ENCODE measurements at regions of chr18 and their contacts with region 1.

Region 1: DNA sequence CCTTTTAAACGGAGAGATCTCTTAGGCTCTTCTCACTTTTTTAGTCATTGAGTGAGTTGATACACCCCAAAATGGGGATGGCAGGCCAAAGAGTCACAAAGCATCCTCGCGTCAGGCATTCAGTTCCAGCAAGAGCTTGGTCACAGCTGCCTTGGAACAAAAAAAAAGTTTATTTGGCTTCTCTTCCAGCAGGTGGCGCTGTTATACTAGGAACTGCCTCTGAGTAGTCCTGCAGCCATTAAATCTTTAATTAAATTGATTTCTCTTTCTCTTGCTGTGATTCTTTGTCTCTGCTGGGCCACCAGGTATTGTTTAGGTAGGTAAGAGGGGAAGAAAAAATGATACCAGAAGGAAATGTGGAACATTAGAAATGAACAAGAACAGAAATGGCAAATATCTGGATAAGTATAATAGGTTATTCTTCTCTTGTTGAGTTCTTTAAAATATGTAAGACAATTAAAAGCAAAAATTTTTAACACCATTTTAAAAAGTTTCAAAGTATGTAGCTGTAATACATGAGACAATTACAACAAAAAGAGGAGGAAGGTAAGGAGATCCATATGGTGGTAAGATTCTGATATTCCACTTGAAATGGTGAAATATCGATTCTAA is 175.1 kb downstream of the GALNT1 start:
- DNase-seq: peak; percentile 21 to 72 (median 56)
- ATAC-seq: peak; percentile 74
- H3K4me3 ChIP-seq: no peak overlapping the region
- H3K4me3 Mint-ChIP-seq: no peak overlapping the region
- H3K27ac ChIP-seq: no peak overlapping the region
- H3K27ac Mint-ChIP-seq: no peak overlapping the region
- H3K4me1 ChIP-seq: no peaks in the 10 kb centered on the region
- H3K4me1 Mint-ChIP-seq: peaks cover 0 to 2% (median 0%) of the 10 kb centered on the region in 7 donors
- H3K27me3 ChIP-seq: no peaks in the 10 kb centered on the region
- H3K27me3 Mint-ChIP-seq: peaks cover 4 to 38% (median 25%) of the 10 kb centered on the region in 5 donors

Region 2: DNA sequence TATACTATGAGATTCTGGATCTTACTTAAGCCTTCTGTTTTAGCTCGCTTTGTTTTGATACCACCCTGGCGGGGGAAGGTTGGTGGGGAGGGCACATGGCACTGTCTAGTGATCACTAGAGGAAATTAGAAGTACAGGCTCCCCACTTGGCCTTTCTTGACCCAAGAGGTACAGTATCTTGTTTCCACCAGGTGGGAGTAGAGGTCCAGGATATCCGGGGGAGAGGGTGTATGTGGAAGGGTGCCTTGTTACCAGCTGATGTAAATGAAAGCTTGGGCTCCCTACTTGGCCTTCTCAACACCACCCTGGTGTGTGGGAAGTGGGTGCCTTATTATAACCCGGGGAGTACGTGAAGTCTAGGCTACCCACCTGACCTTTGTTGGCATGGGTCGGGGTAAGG is 167.6 kb before region 1 on chr18:
- CTCF ChIA-PET with region 1: no interaction called
- POLR2A ChIA-PET with region 1: no interaction called
- intact Hi-C with region 1: loop called in 1 of 2 experiments (anchors 1 kb)
- DNase-seq: peak in 7 of 9 donors; percentile 21 to 47 (median 35)
- ATAC-seq: peak; percentile 74
- H3K4me3 ChIP-seq: no peak overlapping the region
- H3K4me3 Mint-ChIP-seq: no peak overlapping the region
- H3K27ac ChIP-seq: no peak overlapping the region
- H3K27ac Mint-ChIP-seq: peak overlapping the region in 1 of 9 donors; percentile 68
- H3K4me1 ChIP-seq: no peaks in the 10 kb centered on the region
- H3K4me1 Mint-ChIP-seq: peaks cover 5 to 53% (median 28%) of the 10 kb centered on the region in 7 donors
- H3K27me3 ChIP-seq: no peaks in the 10 kb centered on the region
- H3K27me3 Mint-ChIP-seq: no peaks in the 10 kb centered on the region

Region 3: DNA sequence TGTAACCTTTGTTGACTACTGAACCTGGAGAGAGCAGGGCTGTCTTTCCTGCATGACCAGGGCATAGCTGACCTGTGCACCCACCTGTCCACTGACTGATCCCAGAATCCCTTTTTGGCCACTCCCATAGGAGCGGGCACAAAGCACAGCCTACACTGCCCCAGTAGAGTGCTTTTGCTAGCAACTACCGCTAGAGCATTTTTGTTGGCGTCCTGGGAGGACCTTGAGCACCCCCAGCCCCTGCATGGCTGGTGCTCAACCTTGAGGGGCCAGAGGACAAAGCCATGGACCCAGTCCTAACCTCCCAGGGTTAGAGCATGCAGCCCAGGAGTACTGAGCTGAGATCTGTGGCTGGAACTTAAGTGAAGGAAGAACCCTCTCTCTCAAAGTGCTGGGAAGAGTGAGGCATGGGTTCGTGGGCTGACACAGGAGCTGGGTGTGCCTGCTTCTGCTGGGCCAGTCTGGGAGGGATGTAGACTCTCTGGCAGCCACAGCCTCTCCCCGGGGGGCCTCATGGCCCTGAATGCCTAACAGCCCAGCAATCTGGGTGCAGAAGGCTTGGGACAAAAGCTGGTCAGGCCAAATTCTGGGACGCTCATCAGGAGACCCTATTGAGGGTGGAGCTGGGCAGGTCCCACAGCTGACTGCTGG is 35.1 kb before region 1 on chr18:
- CTCF ChIA-PET with region 1: no interaction called
- POLR2A ChIA-PET with region 1: no interaction called
- intact Hi-C with region 1: no loop called
- DNase-seq: no peak
- ATAC-seq: no peak
- H3K4me3 ChIP-seq: no peak overlapping the region
- H3K4me3 Mint-ChIP-seq: no peak overlapping the region
- H3K27ac ChIP-seq: no peak overlapping the region
- H3K27ac Mint-ChIP-seq: no peak overlapping the region
- H3K4me1 ChIP-seq: no peaks in the 10 kb centered on the region
- H3K4me1 Mint-ChIP-seq: no peaks in the 10 kb centered on the region
- H3K27me3 ChIP-seq: no peaks in the 10 kb centered on the region
- H3K27me3 Mint-ChIP-seq: peaks cover 4 to 29% (median 17%) of the 10 kb centered on the region in 5 donors

Region 4: DNA sequence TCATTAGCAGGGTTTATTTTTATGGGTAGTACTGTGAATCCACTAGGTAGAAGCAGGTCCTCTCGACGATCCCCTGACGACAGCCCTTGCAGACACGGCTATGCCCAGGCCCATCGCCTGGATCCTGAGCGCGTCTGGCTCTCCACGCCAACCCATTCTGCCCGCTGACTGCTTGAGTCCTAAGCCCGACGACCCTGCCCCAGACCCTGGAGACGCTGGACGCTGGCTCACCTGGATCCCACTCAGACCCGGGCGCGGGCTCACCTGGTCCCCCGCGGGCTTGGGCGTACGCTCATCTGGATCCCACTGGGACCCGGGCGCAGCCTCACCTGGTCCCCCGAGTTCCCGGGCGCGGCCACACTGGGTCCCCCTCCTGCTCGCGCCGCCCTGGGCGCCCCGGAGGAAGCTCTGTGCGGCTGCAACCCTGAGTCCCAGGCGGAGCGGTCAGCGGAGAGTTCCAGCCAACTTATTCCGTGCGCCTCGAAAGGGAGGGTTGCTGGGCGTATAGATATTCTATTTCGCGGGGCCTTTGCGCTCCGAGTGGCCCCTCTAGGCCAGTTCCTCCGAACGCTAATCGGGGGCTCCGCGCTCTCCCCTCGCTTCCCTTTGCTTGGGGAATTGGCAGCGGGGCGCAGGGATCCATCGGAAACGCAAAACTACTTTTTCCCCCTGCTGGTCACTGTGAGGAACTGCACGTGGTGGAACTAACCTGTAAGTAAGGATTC is 193.5 kb after region 1 on chr18:
- CTCF ChIA-PET with region 1: interaction called, 4 read pairs
- POLR2A ChIA-PET with region 1: no interaction called
- intact Hi-C with region 1: loop called (anchors 1 kb)
- DNase-seq: peak; percentile 36 to 68 (median 57)
- ATAC-seq: peak; percentile 89
- H3K4me3 ChIP-seq: peak overlapping the region; percentile 70
- H3K4me3 Mint-ChIP-seq: peak overlapping the region; percentile 78 to 93 (median 88)
- H3K27ac ChIP-seq: no peak overlapping the region
- H3K27ac Mint-ChIP-seq: peak overlapping the region in 4 of 9 donors; percentile 21 to 59 (median 28)
- H3K4me1 ChIP-seq: peaks cover 4 to 8% of the 10 kb centered on the region in 2 donors
- H3K4me1 Mint-ChIP-seq: peaks cover 0 to 9% (median 4%) of the 10 kb centered on the region in 7 donors
- H3K27me3 ChIP-seq: peaks cover 0 to 4% of the 10 kb centered on the region in 2 donors
- H3K27me3 Mint-ChIP-seq: peaks cover 14 to 33% (median 24%) of the 10 kb centered on the region in 5 donors

Region 5: GRCh38 chr18:36015629-36016028 is 259.0 kb after region 1 on chr18:
- CTCF ChIA-PET with region 1: no interaction called
- POLR2A ChIA-PET with region 1: no interaction called
- intact Hi-C with region 1: loop called (anchors 1 kb)
- DNase-seq: no peak
- ATAC-seq: no peak
- H3K4me3 ChIP-seq: no peak overlapping the region
- H3K4me3 Mint-ChIP-seq: no peak overlapping the region
- H3K27ac ChIP-seq: no peak overlapping the region
- H3K27ac Mint-ChIP-seq: no peak overlapping the region
- H3K4me1 ChIP-seq: no peaks in the 10 kb centered on the region
- H3K4me1 Mint-ChIP-seq: peaks cover 0 to 17% (median 5%) of the 10 kb centered on the region in 7 donors
- H3K27me3 ChIP-seq: no peaks in the 10 kb centered on the region
- H3K27me3 Mint-ChIP-seq: no peaks in the 10 kb centered on the region

Region 6: GRCh38 chr18:36284671-36285295 is 528.2 kb after region 1 on chr18:
- CTCF ChIA-PET with region 1: interaction called, 16 read pairs
- POLR2A ChIA-PET with region 1: no interaction called
- intact Hi-C with region 1: loop called (anchors 1 kb)
- DNase-seq: peak in 7 of 9 donors; percentile 20 to 61 (median 54)
- ATAC-seq: peak; percentile 67
- H3K4me3 ChIP-seq: no peak overlapping the region
- H3K4me3 Mint-ChIP-seq: no peak overlapping the region
- H3K27ac ChIP-seq: no peak overlapping the region
- H3K27ac Mint-ChIP-seq: no peak overlapping the region
- H3K4me1 ChIP-seq: no peaks in the 10 kb centered on the region
- H3K4me1 Mint-ChIP-seq: peaks cover 0 to 4% (median 0%) of the 10 kb centered on the region in 7 donors
- H3K27me3 ChIP-seq: no peaks in the 10 kb centered on the region
- H3K27me3 Mint-ChIP-seq: peaks cover 30 to 59% (median 33%) of the 10 kb centered on the region in 5 donors

Measured in naive thymus-derived CD4-positive, alpha-beta T cell (primary cell).